AG04449 (cell line): ENCODE measurements at regions of chr20 and their contacts with region 1.

Region 1: DNA sequence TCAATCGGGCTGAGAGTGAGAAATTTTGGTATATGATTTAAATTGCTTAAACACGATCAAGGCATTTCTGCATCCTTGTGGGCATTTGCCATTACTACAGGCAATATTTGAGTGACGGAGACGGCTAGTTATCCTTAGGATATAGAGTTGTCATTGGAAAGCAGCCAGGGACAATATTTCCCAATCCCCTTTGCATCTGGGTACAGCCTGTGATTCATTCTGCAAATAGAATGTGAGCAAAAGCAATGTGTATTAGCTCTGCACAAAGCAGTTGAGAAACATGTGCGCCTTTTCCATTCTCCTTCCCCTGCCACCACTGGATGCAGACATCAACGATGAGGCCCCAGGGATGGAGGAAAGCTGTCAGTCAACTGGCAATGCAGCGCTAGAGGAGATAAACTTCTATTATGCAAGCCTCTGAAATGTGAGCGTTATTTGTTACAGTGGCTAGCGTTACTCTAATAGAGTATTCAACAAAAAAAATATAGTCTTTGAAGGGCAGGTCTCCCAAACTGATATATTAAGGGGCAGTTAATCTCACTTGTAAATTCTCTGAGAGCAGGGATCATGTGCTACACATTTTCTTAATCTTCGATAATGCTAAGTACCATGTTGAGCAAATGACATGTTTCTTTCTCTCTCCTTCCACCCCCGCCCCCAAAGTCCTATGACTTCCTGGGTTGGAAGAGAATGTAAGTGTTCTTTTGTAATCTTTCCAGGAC is 37.1 kb upstream of the NCOA3 start:
- DNase-seq: peak; percentile 94
- H3K4me3 ChIP-seq: no peak overlapping the region
- CTCF ChIP-seq: peak; percentile 46

Region 2: GRCh38 chr20:47501483-47502270 is 37.1 kb after region 1 on chr20 and contains the start of gene NCOA3:
- CTCF ChIA-PET with region 1: interaction called, 5 read pairs
- POLR2A ChIA-PET with region 1: interaction called, 12 read pairs
- DNase-seq: peak; percentile 64
- H3K4me3 ChIP-seq: peak within 1 kb of the TSS; percentile 82
- CTCF ChIP-seq: peak; percentile 68

Region 3: DNA sequence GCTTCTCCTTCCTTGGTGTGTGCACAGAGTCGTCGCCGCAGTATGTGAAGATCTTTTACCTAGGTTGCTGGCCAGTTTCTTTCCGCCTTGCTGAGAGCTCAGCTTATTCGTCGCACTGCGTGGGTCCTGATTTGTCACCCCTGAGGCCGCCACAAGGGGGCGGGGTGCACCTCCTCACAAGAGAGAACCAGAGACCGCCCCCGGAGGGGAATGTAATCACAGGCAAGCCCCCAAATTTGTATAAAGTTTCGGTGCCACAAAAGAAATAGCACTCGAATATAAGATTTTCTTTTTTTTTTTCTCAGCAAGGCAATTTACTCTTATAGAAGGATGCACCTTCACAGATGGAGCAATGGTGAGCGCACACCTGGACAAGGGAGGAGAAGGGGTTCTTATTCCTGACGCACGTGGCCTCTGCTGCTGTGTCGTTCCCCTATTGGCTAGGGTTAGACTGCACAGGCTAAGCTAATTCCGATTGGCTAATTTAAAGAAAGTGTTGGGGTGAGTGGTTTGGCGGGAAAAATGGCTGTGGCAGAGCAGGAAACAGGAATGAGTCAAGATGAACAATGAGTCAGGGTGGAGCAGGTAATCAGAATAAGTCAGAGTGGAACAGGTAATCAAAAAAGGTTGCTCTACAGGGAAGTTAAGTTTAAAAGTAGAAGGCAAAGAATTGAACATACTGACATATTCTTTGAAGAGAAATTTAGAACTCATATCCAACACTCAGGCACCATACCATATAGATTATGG is 56.7 kb after region 1 on chr20:
- CTCF ChIA-PET with region 1: no interaction called
- POLR2A ChIA-PET with region 1: no interaction called
- DNase-seq: no peak
- H3K4me3 ChIP-seq: no peak overlapping the region
- CTCF ChIP-seq: no peak

Region 4: GRCh38 chr20:47818996-47819609 is 354.6 kb after region 1 on chr20:
- CTCF ChIA-PET with region 1: no interaction called
- POLR2A ChIA-PET with region 1: no interaction called
- DNase-seq: no peak
- H3K4me3 ChIP-seq: no peak overlapping the region
- CTCF ChIP-seq: no peak